Activated CD8-positive, alpha-beta T cell treated with anti-CD3 and anti-CD28 coated beads for 36 hours (primary cell): ENCODE measurements at regions of chr1 and their contacts with region 1.

Region 1: DNA sequence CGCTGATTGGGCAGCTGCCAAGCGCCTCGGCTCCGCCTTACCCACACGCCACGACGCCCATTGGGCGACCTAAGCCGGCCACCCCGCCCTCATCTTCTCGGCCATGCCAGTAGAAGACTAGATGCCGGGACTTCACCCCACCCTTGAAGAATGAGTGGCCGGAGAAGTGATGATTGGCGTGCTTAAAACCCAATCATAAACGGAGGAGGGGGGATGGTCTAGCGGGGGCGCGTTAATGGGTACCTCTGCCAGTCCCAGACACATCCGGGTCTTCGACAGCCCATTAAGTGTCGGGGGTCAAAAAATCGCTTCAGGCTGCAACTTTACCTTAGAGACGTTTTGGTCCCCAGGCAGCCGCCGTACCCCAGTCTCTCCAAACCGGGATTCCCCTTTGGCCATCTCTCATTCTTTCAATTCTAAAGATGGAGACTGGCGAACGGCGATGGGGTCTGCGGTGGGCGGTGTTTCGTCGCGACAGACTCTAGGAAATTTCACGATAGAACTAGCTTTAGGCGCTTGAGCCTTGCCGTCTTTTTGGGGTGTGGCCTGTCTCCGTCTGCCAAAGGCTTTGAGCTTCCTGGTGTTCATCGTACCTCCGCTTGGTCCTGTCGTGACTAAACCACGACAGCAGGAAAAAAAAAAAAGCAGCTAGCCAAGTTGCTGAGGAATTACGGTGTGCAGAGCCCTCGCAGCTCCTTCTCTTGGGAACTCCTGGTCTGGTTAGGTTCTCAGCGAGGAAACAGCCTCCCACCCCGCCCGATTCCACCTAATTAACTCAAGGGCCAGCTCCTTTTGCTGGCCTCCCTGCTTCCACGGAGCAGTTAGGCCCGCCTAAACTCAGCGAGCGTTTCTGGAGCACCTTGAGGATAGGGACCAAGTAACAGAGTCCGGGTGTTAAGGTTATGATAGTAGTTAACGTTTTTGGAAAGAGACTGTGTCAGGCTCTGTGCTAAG is at the start of gene GATAD2B:
- DNase-seq: peak; percentile 100
- ATAC-seq: peak; percentile 93
- H3K4me3 Mint-ChIP-seq: peak within 1 kb of the TSS; percentile 95
- H3K27ac Mint-ChIP-seq: peak within 1 kb of the TSS; percentile 97
- H3K4me1 Mint-ChIP-seq: peaks cover 38% of the 10 kb centered on the region
- H3K27me3 Mint-ChIP-seq: no peaks in the 10 kb centered on the region
- CTCF ChIP-seq: no peak
- total RNA-seq, gene GATAD2B: 59.5 to 59.8 TPM

Region 2: GRCh38 chr1:153805042-153805745 is 118.1 kb before region 1 on chr1:
- CTCF ChIA-PET with region 1: interaction called, 3 read pairs
- POLR2A ChIA-PET with region 1: interaction called, 24 read pairs
- intact Hi-C with region 1: loop called (anchors 5 kb)
- DNase-seq: peak; percentile 91
- ATAC-seq: peak; percentile 98
- H3K4me3 Mint-ChIP-seq: peak overlapping the region; percentile 41
- H3K27ac Mint-ChIP-seq: peak overlapping the region; percentile 90
- H3K4me1 Mint-ChIP-seq: peaks cover 38% of the 10 kb centered on the region
- H3K27me3 Mint-ChIP-seq: no peaks in the 10 kb centered on the region
- CTCF ChIP-seq: no peak

Region 3: DNA sequence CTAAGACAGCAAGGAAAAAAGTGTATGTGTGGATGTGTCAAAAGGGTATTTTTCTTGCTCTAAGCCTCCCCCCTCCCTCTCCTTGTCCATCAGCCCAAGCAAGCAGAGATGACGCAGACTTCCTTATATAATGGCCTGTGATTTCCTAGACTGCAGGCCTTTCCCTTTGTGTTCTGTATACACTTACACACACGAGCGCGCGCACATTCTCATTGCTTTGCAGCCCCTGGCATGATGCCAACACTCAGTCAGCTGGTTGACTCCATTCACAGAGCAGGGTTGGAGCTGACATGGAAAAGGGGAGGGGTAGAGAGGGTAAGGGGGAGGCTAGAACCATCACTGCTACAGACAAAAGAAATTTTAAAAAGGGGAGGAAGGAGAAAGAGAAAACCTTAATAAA is 42.3 kb before region 1 on chr1:
- CTCF ChIA-PET with region 1: interaction called, 4 read pairs
- POLR2A ChIA-PET with region 1: interaction called, 11 read pairs
- intact Hi-C with region 1: no loop called
- DNase-seq: peak; percentile 58
- ATAC-seq: peak; percentile 72
- H3K4me3 Mint-ChIP-seq: no peak overlapping the region
- H3K27ac Mint-ChIP-seq: no peak overlapping the region
- H3K4me1 Mint-ChIP-seq: peaks cover 18% of the 10 kb centered on the region
- H3K27me3 Mint-ChIP-seq: no peaks in the 10 kb centered on the region
- CTCF ChIP-seq: no peak

Region 4: DNA sequence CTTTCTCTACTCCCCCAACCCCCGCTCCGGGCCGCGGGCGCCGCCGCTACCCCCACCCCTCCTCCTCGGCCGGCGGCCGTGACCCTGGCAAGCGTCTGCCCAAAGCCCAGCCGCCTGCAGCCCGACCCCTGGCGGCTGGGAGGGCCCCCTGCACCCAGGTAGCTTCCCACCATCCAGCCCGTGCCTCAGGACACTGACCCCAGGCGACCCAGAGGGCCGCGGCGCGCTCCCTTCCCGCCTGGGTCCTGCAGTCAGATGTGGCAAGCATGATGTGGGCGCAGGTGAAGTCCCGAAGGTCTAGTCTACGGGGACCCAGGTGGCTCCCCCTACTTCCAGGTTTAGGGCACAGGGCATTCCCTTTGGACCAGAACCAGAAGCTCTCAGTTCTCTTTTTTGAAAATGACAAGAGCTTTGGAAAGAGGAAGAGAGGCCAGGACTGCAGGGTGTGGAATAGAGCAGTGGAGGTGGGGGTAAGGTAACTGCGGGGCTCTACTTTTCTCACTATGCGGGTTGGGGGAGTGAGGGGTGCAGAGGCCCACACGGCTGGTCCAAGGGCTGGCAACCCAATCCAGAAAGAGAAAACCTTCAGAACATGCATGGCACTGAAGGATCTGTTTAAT is 23.5 kb after region 1 on chr1 and contains the start of gene DENND4B:
- CTCF ChIA-PET with region 1: interaction called, 46 read pairs
- POLR2A ChIA-PET with region 1: interaction called, 126 read pairs
- intact Hi-C with region 1: no loop called
- DNase-seq: peak; percentile 78
- ATAC-seq: peak; percentile 73
- H3K4me3 Mint-ChIP-seq: peak within 1 kb of the TSS; percentile 88
- H3K27ac Mint-ChIP-seq: peak within 1 kb of the TSS; percentile 99
- H3K4me1 Mint-ChIP-seq: peaks cover 26% of the 10 kb centered on the region
- H3K27me3 Mint-ChIP-seq: no peaks in the 10 kb centered on the region
- CTCF ChIP-seq: peak; percentile 99
- total RNA-seq, gene DENND4B: 102 to 107 TPM

Region 5: GRCh38 chr1:153977250-153978240 is 54.3 kb after region 1 on chr1 and contains the start of gene JTB:
- CTCF ChIA-PET with region 1: interaction called, 3 read pairs
- POLR2A ChIA-PET with region 1: interaction called, 41 read pairs
- intact Hi-C with region 1: no loop called
- DNase-seq: peak; percentile 94
- ATAC-seq: peak; percentile 96
- H3K4me3 Mint-ChIP-seq: peak within 1 kb of the TSS; percentile 99
- H3K27ac Mint-ChIP-seq: peak within 1 kb of the TSS; percentile 98
- H3K4me1 Mint-ChIP-seq: peaks cover 28% of the 10 kb centered on the region
- H3K27me3 Mint-ChIP-seq: no peaks in the 10 kb centered on the region
- CTCF ChIP-seq: no peak
- total RNA-seq, gene JTB: 151 to 153 TPM